Activated T-helper 2 cell treated with anti-CD3 and anti-CD28 coated beads, Interferon-gamma antibody, Interleukin-2, Interleukin-4, amounts not matched to agents 10 μg/mL and 5 μg/mL and 100 μg/mL, durations not matched to agents 14 hours and 24 hours and 36 hours (primary cell): ENCODE measurements at regions of chr9 and their contacts with region 1.

Region 1: GRCh38 chr9:134391314-134392231 is 65.3 kb downstream of the RXRA start:
- DNase-seq: peak; percentile 55
- H3K4me3 Mint-ChIP-seq: peak overlapping the region; percentile 78
- H3K27ac Mint-ChIP-seq: peak overlapping the region; percentile 92
- H3K4me1 Mint-ChIP-seq: peaks cover 44% of the 10 kb centered on the region
- H3K27me3 Mint-ChIP-seq: peaks cover 7% of the 10 kb centered on the region

Region 2: DNA sequence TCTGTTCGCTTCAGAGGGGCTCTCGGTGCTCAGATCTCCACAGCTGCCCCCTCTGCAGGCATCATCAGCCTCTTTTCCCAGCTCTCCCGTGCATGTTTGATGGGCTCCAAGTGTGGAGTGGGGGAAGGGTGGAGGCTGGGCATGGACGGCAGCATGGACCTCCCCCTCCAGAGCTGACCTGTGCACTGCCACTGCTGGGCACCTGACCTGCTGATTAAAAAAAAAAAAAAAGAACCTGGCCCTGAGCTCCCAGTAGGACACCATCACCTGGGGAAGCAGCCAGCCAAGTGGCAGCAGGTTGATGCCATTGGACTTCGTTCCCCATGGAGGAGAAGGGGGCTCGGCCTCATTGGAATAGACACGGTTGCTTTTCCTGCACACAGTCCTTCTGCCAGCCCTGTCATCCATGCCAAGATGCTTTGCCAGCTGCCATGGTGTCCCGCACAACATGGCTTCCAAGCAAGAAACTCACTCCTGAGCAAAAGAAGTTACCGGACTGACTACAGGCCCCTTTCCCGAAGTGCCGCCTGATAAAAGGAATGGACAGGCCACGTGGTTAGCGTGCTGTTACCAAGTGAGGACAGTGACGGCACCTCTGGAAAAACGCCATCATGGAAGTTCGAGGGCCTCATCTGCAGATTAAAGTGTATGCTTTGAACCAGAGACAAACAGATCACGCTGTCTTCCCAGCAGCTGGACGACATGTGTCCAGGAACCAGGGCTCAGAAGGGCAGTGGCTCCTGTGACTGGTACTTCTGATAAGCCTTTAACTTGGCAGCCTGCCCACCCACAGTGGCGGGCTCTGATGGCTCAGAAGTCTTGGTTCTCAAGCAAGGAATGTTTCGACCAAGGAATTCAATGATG is 381.0 kb before region 1 on chr9:
- intact Hi-C with region 1: no loop called
- DNase-seq: no peak
- H3K4me3 Mint-ChIP-seq: no peak overlapping the region
- H3K27ac Mint-ChIP-seq: no peak overlapping the region
- H3K4me1 Mint-ChIP-seq: no peaks in the 10 kb centered on the region
- H3K27me3 Mint-ChIP-seq: no peaks in the 10 kb centered on the region

Region 3: GRCh38 chr9:134378901-134379338 is 12.7 kb before region 1 on chr9:
- intact Hi-C with region 1: no loop called
- DNase-seq: no peak
- H3K4me3 Mint-ChIP-seq: no peak overlapping the region
- H3K27ac Mint-ChIP-seq: no peak overlapping the region
- H3K4me1 Mint-ChIP-seq: peaks cover 9% of the 10 kb centered on the region
- H3K27me3 Mint-ChIP-seq: no peaks in the 10 kb centered on the region

Region 4: GRCh38 chr9:134407123-134407808 is 15.7 kb after region 1 on chr9:
- intact Hi-C with region 1: loop called (anchors 2 kb)
- DNase-seq: peak; percentile 77
- H3K4me3 Mint-ChIP-seq: peak overlapping the region; percentile 55
- H3K27ac Mint-ChIP-seq: no peak overlapping the region
- H3K4me1 Mint-ChIP-seq: peaks cover 29% of the 10 kb centered on the region
- H3K27me3 Mint-ChIP-seq: peaks cover 4% of the 10 kb centered on the region